Activated B cell treated with CpG ODN at 0.5 μM for 24 hours (primary cell): ENCODE measurements at regions of chr17 and their contacts with region 1.

Region 1: GRCh38 chr17:39153599-39154051 is 2.2 kb upstream of the PLXDC1 start:
- DNase-seq: peak; percentile 92
- ATAC-seq: peak; percentile 54
- H3K4me3 Mint-ChIP-seq: peak overlapping the region; percentile 97
- H3K27ac Mint-ChIP-seq: peak overlapping the region; percentile 99
- H3K4me1 Mint-ChIP-seq: peaks cover 36% of the 10 kb centered on the region
- H3K27me3 Mint-ChIP-seq: peaks cover 38% of the 10 kb centered on the region
- CTCF ChIP-seq: no peak

Region 2: DNA sequence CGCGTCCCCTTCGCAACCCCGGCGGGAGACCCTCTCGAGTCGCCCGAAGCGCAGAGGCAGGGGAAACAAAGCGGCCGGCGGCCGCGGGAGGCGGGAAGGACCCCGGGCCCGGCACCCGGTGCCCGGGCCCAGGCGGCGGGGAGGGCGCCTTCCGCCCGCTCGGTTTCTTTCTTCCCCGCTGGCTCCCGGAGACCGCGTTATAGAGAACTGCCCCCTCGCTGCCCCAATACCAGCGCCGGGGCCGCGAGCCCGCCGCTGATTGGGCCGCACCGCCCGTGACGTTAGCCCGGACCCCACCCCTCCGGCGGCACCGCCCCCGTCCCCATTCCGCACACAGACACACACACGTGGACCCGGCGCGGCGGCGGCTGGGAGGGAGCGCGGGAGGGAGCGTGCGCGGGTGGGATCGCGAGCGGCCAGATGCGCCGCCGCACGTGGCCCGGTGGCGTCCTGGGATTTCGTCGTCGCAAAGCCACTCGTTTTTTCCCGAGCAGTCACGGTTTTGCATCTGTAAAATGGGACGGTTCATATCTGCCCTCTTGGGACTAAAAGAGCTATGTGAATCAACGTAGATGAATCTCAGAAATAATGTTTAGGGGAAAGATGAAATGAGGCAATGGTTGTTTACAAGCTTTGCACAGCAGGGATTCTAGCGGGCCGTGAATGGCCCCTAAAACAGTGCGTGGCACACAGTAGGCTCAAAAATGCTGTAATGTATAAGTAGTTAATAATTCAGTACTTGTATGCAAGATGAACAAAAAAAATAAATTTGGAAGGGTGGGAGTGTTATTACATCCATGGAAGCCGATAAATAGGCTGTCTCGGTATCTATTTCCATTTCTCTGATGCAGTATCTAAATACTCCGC is 478.6 kb before region 1 on chr17 and contains the start of gene EPOP:
- CTCF ChIA-PET with region 1: no interaction called
- POLR2A ChIA-PET with region 1: no interaction called
- intact Hi-C with region 1: loop called (anchors 10 kb)
- DNase-seq: peak; percentile 79
- ATAC-seq: peak; percentile 88
- H3K4me3 Mint-ChIP-seq: peak within 1 kb of the TSS; percentile 70
- H3K27ac Mint-ChIP-seq: no peak within 1 kb of the TSS
- H3K4me1 Mint-ChIP-seq: peaks cover 32% of the 10 kb centered on the region
- H3K27me3 Mint-ChIP-seq: peaks cover 29% of the 10 kb centered on the region
- CTCF ChIP-seq: no peak
- total RNA-seq, gene EPOP: 2.8 and 3.0 TPM in 2 replicates

Region 3: DNA sequence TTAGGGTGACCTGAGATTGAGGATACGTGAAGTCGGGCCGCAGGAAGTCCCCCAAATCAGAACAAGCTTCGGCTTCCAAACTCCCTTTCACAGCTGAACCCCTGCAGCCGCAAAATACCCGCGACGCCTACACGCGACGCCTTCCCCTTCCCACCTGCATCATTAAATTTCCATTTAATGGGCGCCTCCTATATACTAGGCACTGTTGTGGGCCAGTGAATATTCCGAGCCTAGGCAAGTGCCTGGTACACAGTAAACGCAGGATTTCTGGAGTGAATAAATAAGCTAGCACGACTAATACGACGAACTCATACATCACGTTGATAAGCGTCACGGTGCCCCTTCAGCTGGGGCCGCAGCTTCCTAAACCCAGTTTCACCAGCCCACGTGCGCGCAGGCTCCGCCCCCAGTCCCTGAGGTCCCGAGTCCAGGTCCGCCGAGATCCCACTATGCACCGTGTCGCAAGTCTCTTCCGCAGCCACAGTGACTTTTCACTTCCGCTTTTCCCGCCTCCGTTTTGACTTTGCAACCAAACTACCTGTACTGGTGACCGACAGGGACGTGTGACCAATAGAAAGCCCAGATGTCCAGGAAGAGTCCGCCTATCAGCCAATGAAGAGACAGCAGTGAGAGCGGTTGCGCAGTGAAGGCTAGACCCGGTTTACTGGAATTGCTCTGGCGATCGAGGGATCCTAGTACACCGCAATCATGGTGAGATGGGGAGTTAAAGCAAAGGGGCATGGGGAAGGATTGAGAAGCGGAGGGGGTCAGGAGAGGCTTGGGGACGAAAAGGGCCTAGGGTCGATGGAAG is 401.3 kb before region 1 on chr17 and contains the start of gene PSMB3:
- CTCF ChIA-PET with region 1: no interaction called
- POLR2A ChIA-PET with region 1: interaction called, 6 read pairs
- intact Hi-C with region 1: loop called (anchors 1 kb)
- DNase-seq: peak; percentile 87
- ATAC-seq: peak; percentile 89
- H3K4me3 Mint-ChIP-seq: peak within 1 kb of the TSS; percentile 98
- H3K27ac Mint-ChIP-seq: peak within 1 kb of the TSS; percentile 93
- H3K4me1 Mint-ChIP-seq: peaks cover 54% of the 10 kb centered on the region
- H3K27me3 Mint-ChIP-seq: peaks cover 25% of the 10 kb centered on the region
- CTCF ChIP-seq: no peak
- total RNA-seq, gene PSMB3: 234 and 250 TPM in 2 replicates

Region 4: GRCh38 chr17:38868817-38869525 is 284.7 kb before region 1 on chr17:
- CTCF ChIA-PET with region 1: interaction called, 33 read pairs
- POLR2A ChIA-PET with region 1: interaction called, 40 read pairs
- intact Hi-C with region 1: loop called (anchors 1 kb)
- DNase-seq: peak; percentile 84
- ATAC-seq: peak; percentile 53
- H3K4me3 Mint-ChIP-seq: peak overlapping the region; percentile 99
- H3K27ac Mint-ChIP-seq: peak overlapping the region; percentile 96
- H3K4me1 Mint-ChIP-seq: peaks cover 72% of the 10 kb centered on the region
- H3K27me3 Mint-ChIP-seq: peaks cover 2% of the 10 kb centered on the region
- CTCF ChIP-seq: no peak

Region 5: GRCh38 chr17:38982858-38983746 is 170.5 kb before region 1 on chr17:
- CTCF ChIA-PET with region 1: interaction called, 160 read pairs
- POLR2A ChIA-PET with region 1: interaction called, 17 read pairs
- intact Hi-C with region 1: loop called (anchors 1 kb)
- DNase-seq: no peak
- ATAC-seq: peak; percentile 54
- H3K4me3 Mint-ChIP-seq: no peak overlapping the region
- H3K27ac Mint-ChIP-seq: no peak overlapping the region
- H3K4me1 Mint-ChIP-seq: no peaks in the 10 kb centered on the region
- H3K27me3 Mint-ChIP-seq: peaks cover 10% of the 10 kb centered on the region
- CTCF ChIP-seq: peak; percentile 47

Region 6: GRCh38 chr17:39138431-39139136 is 15.0 kb before region 1 on chr17:
- CTCF ChIA-PET with region 1: no interaction called
- POLR2A ChIA-PET with region 1: no interaction called
- intact Hi-C with region 1: no loop called
- DNase-seq: no peak
- ATAC-seq: no peak
- H3K4me3 Mint-ChIP-seq: no peak overlapping the region
- H3K27ac Mint-ChIP-seq: no peak overlapping the region
- H3K4me1 Mint-ChIP-seq: no peaks in the 10 kb centered on the region
- H3K27me3 Mint-ChIP-seq: no peaks in the 10 kb centered on the region
- CTCF ChIP-seq: no peak

Region 7: DNA sequence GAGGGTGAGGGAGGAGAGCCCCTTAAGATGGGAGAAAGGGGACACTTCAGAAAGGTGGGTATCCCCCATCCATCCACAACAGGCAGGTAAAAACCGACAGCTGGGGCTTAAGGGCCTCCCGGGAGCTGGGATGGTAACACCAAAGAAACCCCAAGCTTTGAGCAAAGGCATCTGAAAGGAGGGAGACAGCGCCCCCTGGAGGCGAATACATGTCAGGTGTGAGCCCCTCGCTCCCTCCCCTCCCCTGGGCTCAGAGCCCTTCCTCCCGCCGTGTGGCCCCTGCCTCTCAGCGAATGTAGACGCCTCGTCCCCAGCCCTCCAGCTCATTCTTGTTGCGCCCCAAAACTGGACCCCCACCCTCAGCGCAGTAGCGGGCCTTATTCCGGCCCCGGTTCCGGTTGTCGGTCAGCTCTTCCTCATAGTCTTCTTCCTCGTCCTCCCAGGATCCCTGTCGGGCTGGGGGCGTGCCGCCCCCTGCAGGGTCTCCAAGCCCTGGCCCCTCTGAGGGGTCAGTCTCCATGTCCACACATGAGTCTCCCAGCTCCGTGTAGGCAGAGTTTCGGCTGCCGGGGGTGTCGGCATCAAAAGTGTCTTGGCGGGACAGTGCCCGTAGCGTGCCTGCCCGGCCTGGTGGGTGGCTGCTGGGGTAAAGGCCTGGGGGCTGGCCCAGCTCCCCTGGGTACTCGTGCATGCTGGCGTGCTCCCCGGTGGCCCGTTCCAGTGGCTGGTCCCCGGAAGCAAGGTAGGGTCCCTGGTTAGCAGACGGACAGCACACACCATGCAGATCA is 21.5 kb after region 1 on chr17:
- CTCF ChIA-PET with region 1: interaction called, 20 read pairs
- POLR2A ChIA-PET with region 1: interaction called, 4 read pairs
- intact Hi-C with region 1: no loop called
- DNase-seq: peak; percentile 55
- ATAC-seq: peak; percentile 85
- H3K4me3 Mint-ChIP-seq: peak overlapping the region; percentile 60
- H3K27ac Mint-ChIP-seq: no peak overlapping the region
- H3K4me1 Mint-ChIP-seq: peaks cover 5% of the 10 kb centered on the region
- H3K27me3 Mint-ChIP-seq: peaks cover 19% of the 10 kb centered on the region
- CTCF ChIP-seq: no peak

Region 8: GRCh38 chr17:39244600-39245570 is 91.3 kb after region 1 on chr17:
- CTCF ChIA-PET with region 1: interaction called, 18 read pairs
- POLR2A ChIA-PET with region 1: interaction called, 3 read pairs
- intact Hi-C with region 1: no loop called
- DNase-seq: peak; percentile 76
- ATAC-seq: peak; percentile 81
- H3K4me3 Mint-ChIP-seq: peak overlapping the region; percentile 56
- H3K27ac Mint-ChIP-seq: no peak overlapping the region
- H3K4me1 Mint-ChIP-seq: peaks cover 20% of the 10 kb centered on the region
- H3K27me3 Mint-ChIP-seq: peaks cover 3% of the 10 kb centered on the region
- CTCF ChIP-seq: peak; percentile 34

Region 9: GRCh38 chr17:39271546-39271945 is 117.9 kb after region 1 on chr17:
- CTCF ChIA-PET with region 1: no interaction called
- POLR2A ChIA-PET with region 1: no interaction called
- intact Hi-C with region 1: no loop called
- DNase-seq: no peak
- ATAC-seq: no peak
- H3K4me3 Mint-ChIP-seq: no peak overlapping the region
- H3K27ac Mint-ChIP-seq: no peak overlapping the region
- H3K4me1 Mint-ChIP-seq: peaks cover 4% of the 10 kb centered on the region
- H3K27me3 Mint-ChIP-seq: no peaks in the 10 kb centered on the region
- CTCF ChIP-seq: no peak